Activated naive CD4-positive, alpha-beta T cell treated with anti-CD3 and anti-CD28 coated beads for 36 hours (primary cell): ENCODE measurements at regions of chr17 and their contacts with region 1.

Region 1: GRCh38 chr17:50289991-50290702 is 15.9 kb downstream of the TMEM92 start:
- DNase-seq: peak; percentile 52
- H3K4me3 Mint-ChIP-seq: no peak overlapping the region
- H3K27ac Mint-ChIP-seq: no peak overlapping the region
- H3K4me1 Mint-ChIP-seq: peaks cover 10% of the 10 kb centered on the region
- H3K27me3 Mint-ChIP-seq: peaks cover 11% of the 10 kb centered on the region

Region 2: GRCh38 chr17:50169121-50169764 is 120.9 kb before region 1 on chr17:
- CTCF ChIA-PET with region 1: interaction called, 10 read pairs
- intact Hi-C with region 1: no loop called
- DNase-seq: peak; percentile 57
- H3K4me3 Mint-ChIP-seq: peak overlapping the region; percentile 46
- H3K27ac Mint-ChIP-seq: no peak overlapping the region
- H3K4me1 Mint-ChIP-seq: peaks cover 10% of the 10 kb centered on the region
- H3K27me3 Mint-ChIP-seq: no peaks in the 10 kb centered on the region

Region 3: DNA sequence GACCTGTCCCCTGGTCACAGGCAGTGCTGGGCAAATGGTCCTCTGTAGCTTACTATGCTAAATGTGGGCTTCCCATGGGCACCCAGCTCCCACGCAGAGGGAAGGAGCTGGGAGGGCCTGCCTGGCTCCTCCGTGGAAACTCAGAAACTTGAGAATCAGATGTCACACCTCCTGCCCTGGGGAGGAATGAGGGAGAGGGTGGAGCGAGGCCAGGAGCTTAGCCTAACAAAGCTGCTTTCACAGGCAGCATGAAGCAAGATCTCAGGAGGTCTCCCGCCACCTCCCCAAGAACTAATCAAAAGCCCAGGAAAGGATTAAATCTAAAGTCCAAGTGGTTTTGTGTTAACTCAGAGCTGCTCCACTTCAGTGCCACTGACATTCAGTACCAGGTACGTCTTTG is 22.2 kb after region 1 on chr17:
- CTCF ChIA-PET with region 1: interaction called, 3 read pairs
- intact Hi-C with region 1: loop called (anchors 1 kb)
- DNase-seq: no peak
- H3K4me3 Mint-ChIP-seq: no peak overlapping the region
- H3K27ac Mint-ChIP-seq: no peak overlapping the region
- H3K4me1 Mint-ChIP-seq: peaks cover 30% of the 10 kb centered on the region
- H3K27me3 Mint-ChIP-seq: peaks cover 10% of the 10 kb centered on the region